Dendritic cell treated with granulocyte-macrophage colony-stimulating factor and Interleukin-4, amounts not matched to agents 40 ng/mL and 50 ng/mL, for 4 days (primary cell): ENCODE measurements at regions of chr4 and their contacts with region 1.

Region 1: DNA sequence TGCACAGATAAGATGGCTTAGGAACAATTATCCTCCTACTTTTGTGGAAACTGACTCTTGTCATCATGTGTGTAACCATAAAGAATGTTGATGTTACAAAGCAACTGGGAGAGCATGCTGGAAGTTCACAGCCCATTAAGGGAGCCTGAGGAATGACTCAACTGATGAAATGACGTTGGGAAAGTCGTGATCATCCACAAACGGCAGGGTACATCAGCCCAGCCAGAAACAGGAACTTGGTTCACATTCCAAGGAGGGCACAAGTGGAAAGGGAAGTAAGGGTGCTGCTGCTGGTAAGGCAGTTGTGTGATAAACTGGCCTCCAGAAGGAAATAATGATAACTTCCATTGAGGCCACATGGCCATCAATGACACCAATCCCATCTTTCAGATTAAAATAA is 6.7 kb downstream of the TEC start:
- H3K4me3 Mint-ChIP-seq: no peak overlapping the region
- H3K27ac Mint-ChIP-seq: peak overlapping the region; percentile 51
- H3K4me1 Mint-ChIP-seq: peaks cover 53% of the 10 kb centered on the region
- H3K27me3 Mint-ChIP-seq: no peaks in the 10 kb centered on the region

Region 2: GRCh38 chr4:48227659-48228058 is 35.3 kb before region 1 on chr4:
- intact Hi-C with region 1: loop called (anchors 5 kb)
- H3K4me3 Mint-ChIP-seq: no peak overlapping the region
- H3K27ac Mint-ChIP-seq: no peak overlapping the region
- H3K4me1 Mint-ChIP-seq: peaks cover 47% of the 10 kb centered on the region
- H3K27me3 Mint-ChIP-seq: no peaks in the 10 kb centered on the region

Region 3: GRCh38 chr4:48321312-48321711 is 58.4 kb after region 1 on chr4:
- intact Hi-C with region 1: no loop called
- H3K4me3 Mint-ChIP-seq: no peak overlapping the region
- H3K27ac Mint-ChIP-seq: no peak overlapping the region
- H3K4me1 Mint-ChIP-seq: no peaks in the 10 kb centered on the region
- H3K27me3 Mint-ChIP-seq: no peaks in the 10 kb centered on the region